ENCODE measurements at regions of chr6 and their contacts with region 1.

Region 1: DNA sequence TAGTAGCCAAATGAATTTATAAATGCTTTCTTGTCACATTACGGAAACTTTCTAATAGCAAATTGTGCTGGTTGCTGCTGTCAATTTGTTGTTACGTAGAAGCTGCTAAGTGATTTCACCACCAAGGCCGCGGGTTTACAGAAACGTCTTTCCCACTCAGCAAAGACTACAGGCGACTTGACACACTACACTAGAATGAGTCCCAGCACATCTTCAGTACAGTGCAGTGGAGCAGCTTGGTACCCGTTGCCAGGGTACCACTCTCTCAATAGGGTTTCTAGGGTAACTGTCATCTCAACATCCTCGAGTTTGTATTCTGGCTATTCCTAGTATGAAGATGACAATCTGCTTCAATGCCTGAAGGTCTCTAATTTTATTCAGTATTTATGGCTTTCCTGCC is 22.7 kb upstream of the ZDHHC14 start:
- DNase-seq: no peak
- ATAC-seq: no peak
- H3K4me3 ChIP-seq: no peak overlapping the region
- H3K27ac ChIP-seq: no peak overlapping the region
- H3K4me1 ChIP-seq: peaks cover 0 to 5% of the 10 kb centered on the region in 2 donors
- H3K27me3 ChIP-seq: no peaks in the 10 kb centered on the region

Region 2: GRCh38 chr6:157211603-157212455 is 146.5 kb before region 1 on chr6:
- intact Hi-C with region 1: no loop called
- DNase-seq: peak in 1 of 2 donors; percentile 54
- ATAC-seq: peak; percentile 17
- H3K4me3 ChIP-seq: no peak overlapping the region
- H3K27ac ChIP-seq: no peak overlapping the region
- H3K4me1 ChIP-seq: no peaks in the 10 kb centered on the region
- H3K27me3 ChIP-seq: no peaks in the 10 kb centered on the region

Region 3: GRCh38 chr6:157323255-157323965 is 34.9 kb before region 1 on chr6 and contains the start of gene TMEM242:
- intact Hi-C with region 1: loop called in 1 of 2 experiments (anchors 2 kb)
- DNase-seq: peak; percentile 95 to 96
- ATAC-seq: peak; percentile 99
- H3K4me3 ChIP-seq: peak within 1 kb of the TSS; percentile 68 to 83
- H3K27ac ChIP-seq: peak within 1 kb of the TSS; percentile 12 to 82
- H3K4me1 ChIP-seq: peaks cover 0 to 6% of the 10 kb centered on the region in 2 donors
- H3K27me3 ChIP-seq: no peaks in the 10 kb centered on the region
- total RNA-seq, gene TMEM242: 13.1 to 17.5 TPM